PC-3 (cell line): ENCODE measurements at regions of chr7 and their contacts with region 1.

Region 1: DNA sequence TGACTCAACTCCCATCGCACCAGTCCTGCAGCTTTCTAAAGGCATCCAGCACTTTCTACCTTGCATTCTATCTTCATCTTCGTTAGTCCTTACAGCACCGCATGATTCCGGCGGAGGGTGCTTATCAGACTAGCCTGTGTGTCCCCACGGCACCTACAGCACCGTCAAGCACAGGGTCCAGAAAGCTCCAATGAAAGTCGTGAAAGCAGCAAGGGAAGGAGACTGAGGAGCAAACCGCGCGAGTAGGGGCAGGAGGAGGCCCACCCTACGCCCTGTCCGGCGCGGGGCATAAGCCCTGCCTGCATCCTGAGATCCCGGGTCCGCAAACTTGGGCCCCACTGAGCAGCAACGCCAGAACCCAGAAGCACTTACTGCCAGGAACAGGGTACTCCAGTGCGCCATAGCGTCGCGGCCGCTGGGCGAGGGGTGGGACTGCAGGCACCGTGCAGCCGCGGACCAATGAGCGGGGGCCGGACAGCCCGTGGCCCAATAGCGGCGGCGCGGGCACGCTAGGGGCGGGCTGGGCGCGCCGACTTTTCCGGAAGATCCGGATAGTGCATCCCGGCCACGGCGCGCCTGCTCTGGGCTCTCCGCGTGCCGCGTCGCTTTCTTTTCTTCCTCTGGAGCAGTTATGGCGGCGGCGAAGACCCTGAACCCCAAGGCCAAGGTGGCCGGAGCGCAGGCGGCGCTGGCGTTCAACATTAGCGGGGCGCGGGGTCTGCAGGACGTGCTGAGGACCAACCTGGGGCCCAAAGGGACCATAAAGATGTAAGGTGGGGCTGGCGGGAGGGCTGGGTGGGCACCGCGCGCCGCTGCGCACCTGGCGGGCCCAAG is 122.1 kb upstream of the VKORC1L1 start:
- DNase-seq: peak; percentile 91
- ATAC-seq: peak; percentile 99
- H3K4me3 ChIP-seq: peak overlapping the region; percentile 90
- H3K27ac ChIP-seq: peak overlapping the region; percentile 40
- H3K4me1 ChIP-seq: peaks cover 8% of the 10 kb centered on the region; the same call in 1 of the 2 replicates
- H3K27me3 ChIP-seq: no peaks in the 10 kb centered on the region
- CTCF ChIP-seq: no peak

Region 2: DNA sequence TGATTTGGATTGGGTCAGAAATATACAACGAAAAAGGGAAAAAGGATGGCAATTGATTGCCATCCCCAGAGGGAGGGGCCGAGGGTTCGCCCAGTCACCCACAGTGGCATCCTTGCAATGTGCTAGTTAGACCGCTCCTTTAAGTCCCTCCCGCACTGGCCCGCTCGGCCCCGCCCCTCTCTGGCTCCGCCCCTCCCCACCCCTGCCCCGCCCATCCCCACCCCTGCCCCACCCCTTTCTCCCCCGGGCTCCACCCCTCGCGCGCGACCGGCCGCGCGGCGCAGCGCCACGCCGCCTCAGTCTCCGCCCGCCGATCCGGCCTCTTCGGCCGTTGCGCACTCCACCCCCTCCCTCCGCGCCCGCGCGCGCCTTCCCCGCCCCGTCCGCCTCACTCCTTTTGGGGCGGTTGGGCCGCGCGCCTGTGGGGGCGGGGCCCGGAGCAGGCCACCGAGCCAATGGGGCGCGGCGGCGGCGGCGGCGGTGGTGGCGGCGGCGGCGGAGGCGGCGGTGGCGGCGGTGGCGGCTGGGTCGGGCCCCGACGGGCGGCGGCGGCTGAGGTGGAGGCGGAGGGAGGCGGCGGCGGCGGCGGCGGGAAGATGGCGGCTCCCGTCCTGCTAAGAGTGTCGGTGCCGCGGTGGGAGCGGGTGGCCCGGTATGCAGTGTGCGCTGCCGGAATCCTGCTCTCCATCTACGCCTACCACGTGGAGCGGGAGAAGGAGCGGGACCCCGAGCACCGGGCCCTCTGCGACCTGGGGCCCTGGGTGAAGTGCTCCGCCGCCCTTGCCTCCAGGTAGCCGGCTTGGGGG is 122.3 kb after region 1 on chr7 and contains the start of gene VKORC1L1:
- CTCF ChIA-PET with region 1: no interaction called
- POLR2A ChIA-PET with region 1: no interaction called
- intact Hi-C with region 1: loop called (anchors 5 kb)
- DNase-seq: peak; percentile 92
- ATAC-seq: peak; percentile 92
- H3K4me3 ChIP-seq: peak within 1 kb of the TSS; percentile 90
- H3K27ac ChIP-seq: no peak within 1 kb of the TSS
- H3K4me1 ChIP-seq: no peaks in the 10 kb centered on the region
- H3K27me3 ChIP-seq: no peaks in the 10 kb centered on the region
- CTCF ChIP-seq: no peak
- total RNA-seq, gene VKORC1L1: 7.6 and 9.4 TPM in 2 replicates

Region 3: DNA sequence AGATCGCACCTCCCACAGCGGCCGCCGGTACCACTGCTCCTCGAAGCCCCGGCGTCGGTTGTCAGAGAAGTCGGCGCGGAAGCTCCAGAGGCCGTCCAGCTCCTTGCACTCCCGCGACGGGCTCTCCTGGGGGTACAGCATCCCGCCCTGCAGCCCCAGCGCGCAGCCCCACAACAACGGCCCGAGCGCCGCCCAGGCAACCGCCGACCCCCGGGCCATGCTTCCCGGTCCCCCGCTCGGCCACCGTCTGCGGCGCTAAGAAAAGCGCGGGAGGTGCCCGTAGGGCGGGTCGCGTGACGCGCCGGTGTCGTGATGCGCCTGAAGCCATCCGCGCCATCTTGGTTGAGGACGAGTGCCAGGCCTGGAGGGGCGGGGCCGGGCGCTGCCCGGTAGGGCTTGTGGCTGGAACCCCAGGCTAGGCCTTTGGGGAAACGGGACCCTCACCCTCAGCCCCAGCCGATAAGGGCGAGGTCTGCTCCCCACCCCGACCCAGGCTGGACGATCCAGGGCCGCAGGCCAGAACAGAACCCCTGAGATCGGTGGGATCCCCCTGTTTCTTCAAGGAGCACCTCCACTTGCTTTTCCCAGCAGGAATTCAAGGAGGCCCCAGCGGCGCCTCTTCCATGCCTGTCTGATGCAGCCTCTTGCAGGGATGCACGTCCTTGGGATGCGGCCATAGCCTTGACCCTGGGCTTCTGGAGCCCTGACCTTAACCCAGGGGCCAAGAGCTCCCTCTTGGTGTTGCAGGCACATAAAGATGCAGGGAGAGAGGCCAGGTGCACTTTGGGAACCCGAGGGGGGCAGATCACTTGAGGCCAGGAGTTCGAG is 231.5 kb after region 1 on chr7 and contains the start of gene GUSB:
- CTCF ChIA-PET with region 1: interaction called, 5 read pairs
- POLR2A ChIA-PET with region 1: interaction called, 15 read pairs
- intact Hi-C with region 1: no loop called
- DNase-seq: peak; percentile 87
- ATAC-seq: peak; percentile 87
- H3K4me3 ChIP-seq: peak within 1 kb of the TSS; percentile 85
- H3K27ac ChIP-seq: no peak within 1 kb of the TSS; the same call in 1 of the 2 replicates
- H3K4me1 ChIP-seq: peaks cover 5% of the 10 kb centered on the region
- H3K27me3 ChIP-seq: no peaks in the 10 kb centered on the region
- CTCF ChIP-seq: no peak
- total RNA-seq, gene GUSB: 36.5 and 37.4 TPM in 2 replicates

Region 4: DNA sequence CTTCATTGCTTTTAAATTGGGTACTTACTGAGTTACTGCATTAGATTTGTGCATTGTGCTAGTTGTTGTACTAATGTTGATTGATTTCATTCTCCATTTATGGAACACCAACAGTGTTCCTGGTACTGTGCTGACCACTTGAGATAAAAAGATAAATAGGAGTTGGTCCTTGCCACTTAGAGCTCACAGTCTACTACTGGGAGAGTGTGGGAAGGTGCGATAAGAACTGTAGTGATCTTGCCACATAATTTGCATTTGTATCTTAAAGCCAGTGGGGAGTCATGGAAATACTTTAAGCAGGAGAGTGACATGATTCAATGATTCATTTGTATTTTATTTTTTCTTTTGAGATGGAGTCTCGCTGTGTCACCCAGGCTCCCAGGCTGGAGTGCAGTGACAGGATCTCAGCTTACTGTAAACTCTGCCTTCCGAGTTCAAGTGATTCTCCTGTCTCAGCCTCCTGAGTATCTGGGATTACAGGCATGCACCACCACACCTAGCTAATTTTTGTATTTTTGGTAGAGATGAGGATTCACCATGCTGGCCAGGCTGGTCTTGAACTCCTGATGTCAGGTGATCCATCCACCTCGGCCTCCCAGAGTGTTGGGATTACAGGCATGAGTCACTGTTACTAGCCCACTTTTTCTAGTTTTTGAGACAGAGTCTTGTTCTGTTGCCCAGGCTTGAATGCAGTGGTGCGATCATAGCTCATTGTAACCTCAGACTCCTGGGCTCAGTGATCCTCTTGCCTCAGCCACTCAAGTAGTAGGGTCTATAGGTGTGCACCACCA is 1119.1 kb after region 1 on chr7:
- CTCF ChIA-PET with region 1: no interaction called
- POLR2A ChIA-PET with region 1: interaction called, 13 read pairs
- intact Hi-C with region 1: no loop called
- DNase-seq: no peak
- ATAC-seq: no peak
- H3K4me3 ChIP-seq: no peak overlapping the region
- H3K27ac ChIP-seq: no peak overlapping the region
- H3K4me1 ChIP-seq: no peaks in the 10 kb centered on the region
- H3K27me3 ChIP-seq: no peaks in the 10 kb centered on the region
- CTCF ChIP-seq: no peak

Region 5: DNA sequence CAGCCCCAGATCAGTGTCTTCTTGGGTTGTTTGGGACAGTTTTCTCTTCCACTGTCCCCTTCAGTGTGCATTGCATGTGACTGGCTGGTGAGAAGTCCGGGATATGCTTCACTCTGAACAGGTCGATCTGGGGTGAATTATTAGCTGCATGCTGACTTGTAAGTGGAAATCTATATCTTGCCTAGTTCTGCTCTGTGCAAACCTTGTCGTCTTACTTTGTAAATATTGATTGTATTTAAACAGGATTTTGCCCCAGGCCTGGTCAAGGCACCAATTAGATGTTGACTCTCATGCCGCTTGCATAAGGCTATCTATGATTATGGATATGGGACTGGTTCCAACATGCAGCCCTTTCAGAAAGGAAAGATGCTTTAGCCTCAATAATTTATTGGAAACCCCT is 1915.6 kb after region 1 on chr7:
- CTCF ChIA-PET with region 1: no interaction called
- POLR2A ChIA-PET with region 1: no interaction called
- intact Hi-C with region 1: no loop called
- DNase-seq: no peak
- ATAC-seq: no peak
- H3K4me3 ChIP-seq: no peak overlapping the region
- H3K27ac ChIP-seq: no peak overlapping the region
- H3K4me1 ChIP-seq: no peaks in the 10 kb centered on the region
- H3K27me3 ChIP-seq: no peaks in the 10 kb centered on the region
- CTCF ChIP-seq: no peak